Caco-2 (cell line): ENCODE measurements at regions of chr6 and their contacts with region 1.

Region 1: GRCh38 chr6:71897276-71897675 is 10.9 kb downstream of the RIMS1 start:
- DNase-seq: peak in 1 of 2 experiments; percentile 11
- H3K4me3 ChIP-seq: no peak overlapping the region
- H3K4me3 Mint-ChIP-seq: peak overlapping the region; percentile 28
- H3K27ac Mint-ChIP-seq: peak overlapping the region; percentile 26
- H3K4me1 ChIP-seq: peaks cover 39% of the 10 kb centered on the region
- H3K4me1 Mint-ChIP-seq: peaks cover 14% of the 10 kb centered on the region
- H3K27me3 ChIP-seq: no peaks in the 10 kb centered on the region
- H3K27me3 Mint-ChIP-seq: no peaks in the 10 kb centered on the region
- CTCF ChIP-seq: no peak

Region 2: GRCh38 chr6:71678091-71678490 is 219.2 kb before region 1 on chr6:
- CTCF ChIA-PET with region 1: no interaction called
- POLR2A ChIA-PET with region 1: no interaction called
- intact Hi-C with region 1: loop called (anchors 2 kb)
- DNase-seq: no peak
- H3K4me3 ChIP-seq: no peak overlapping the region
- H3K4me3 Mint-ChIP-seq: no peak overlapping the region
- H3K27ac Mint-ChIP-seq: no peak overlapping the region
- H3K4me1 ChIP-seq: peaks cover 65% of the 10 kb centered on the region
- H3K4me1 Mint-ChIP-seq: peaks cover 30% of the 10 kb centered on the region
- H3K27me3 ChIP-seq: no peaks in the 10 kb centered on the region
- H3K27me3 Mint-ChIP-seq: no peaks in the 10 kb centered on the region
- CTCF ChIP-seq: no peak